ENCODE measurements at regions of chr5 and their contacts with region 1.

Region 1: DNA sequence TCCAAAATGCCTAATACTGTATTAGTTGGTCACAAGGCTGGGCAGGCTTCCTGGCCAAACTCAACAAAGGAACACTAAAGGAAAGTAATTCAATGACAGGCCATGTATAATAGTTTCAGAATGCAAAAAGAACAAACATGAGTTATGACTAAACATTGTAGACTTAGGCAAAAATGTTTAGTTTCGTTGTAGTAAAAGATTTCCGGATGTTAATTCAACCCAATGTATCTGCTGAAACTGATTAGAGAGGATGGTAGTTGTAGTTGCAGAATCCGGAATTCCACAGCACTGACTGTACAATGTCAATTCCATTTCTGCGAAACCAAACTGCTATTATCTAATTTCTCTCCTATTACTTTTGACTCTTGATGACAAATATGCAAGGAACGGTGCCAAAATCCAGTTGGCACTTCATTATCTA is 117.9 kb upstream of the FST start:
- DNase-seq: peak; percentile 45 to 95
- H3K4me3 ChIP-seq: no peak overlapping the region
- H3K27ac ChIP-seq: peak overlapping the region; percentile 97
- H3K4me1 ChIP-seq: peaks cover 38% of the 10 kb centered on the region
- H3K27me3 ChIP-seq: no peaks in the 10 kb centered on the region
- CTCF ChIP-seq: no peak

Region 2: GRCh38 chr5:52922386-52922785 is 440.1 kb before region 1 on chr5:
- CTCF ChIA-PET with region 1: no interaction called
- POLR2A ChIA-PET with region 1: no interaction called
- intact Hi-C with region 1: loop called (anchors 5 kb)
- DNase-seq: peak; percentile 83 to 98
- H3K4me3 ChIP-seq: no peak overlapping the region
- H3K27ac ChIP-seq: peak overlapping the region; percentile 78
- H3K4me1 ChIP-seq: peaks cover 20% of the 10 kb centered on the region
- H3K27me3 ChIP-seq: no peaks in the 10 kb centered on the region
- CTCF ChIP-seq: no peak

Region 3: GRCh38 chr5:53323943-53324642 is 38.4 kb before region 1 on chr5:
- CTCF ChIA-PET with region 1: no interaction called
- POLR2A ChIA-PET with region 1: no interaction called
- intact Hi-C with region 1: loop called (anchors 2 kb)
- DNase-seq: peak; percentile 51 to 88
- H3K4me3 ChIP-seq: no peak overlapping the region
- H3K27ac ChIP-seq: peak overlapping the region; percentile 45; the same call in 1 of the 2 replicates
- H3K4me1 ChIP-seq: peaks cover 16% of the 10 kb centered on the region
- H3K27me3 ChIP-seq: no peaks in the 10 kb centered on the region
- CTCF ChIP-seq: no peak

Region 4: GRCh38 chr5:53425598-53426511 is 63.3 kb after region 1 on chr5:
- CTCF ChIA-PET with region 1: no interaction called
- POLR2A ChIA-PET with region 1: no interaction called
- intact Hi-C with region 1: loop called (anchors 5 kb)
- DNase-seq: no peak
- H3K4me3 ChIP-seq: no peak overlapping the region
- H3K27ac ChIP-seq: no peak overlapping the region
- H3K4me1 ChIP-seq: 0 out of 2 replicates have a peak, but pooled peaks cover 6% of the 10 kb centered on the region
- H3K27me3 ChIP-seq: no peaks in the 10 kb centered on the region
- CTCF ChIP-seq: peak; percentile 45

Region 5: DNA sequence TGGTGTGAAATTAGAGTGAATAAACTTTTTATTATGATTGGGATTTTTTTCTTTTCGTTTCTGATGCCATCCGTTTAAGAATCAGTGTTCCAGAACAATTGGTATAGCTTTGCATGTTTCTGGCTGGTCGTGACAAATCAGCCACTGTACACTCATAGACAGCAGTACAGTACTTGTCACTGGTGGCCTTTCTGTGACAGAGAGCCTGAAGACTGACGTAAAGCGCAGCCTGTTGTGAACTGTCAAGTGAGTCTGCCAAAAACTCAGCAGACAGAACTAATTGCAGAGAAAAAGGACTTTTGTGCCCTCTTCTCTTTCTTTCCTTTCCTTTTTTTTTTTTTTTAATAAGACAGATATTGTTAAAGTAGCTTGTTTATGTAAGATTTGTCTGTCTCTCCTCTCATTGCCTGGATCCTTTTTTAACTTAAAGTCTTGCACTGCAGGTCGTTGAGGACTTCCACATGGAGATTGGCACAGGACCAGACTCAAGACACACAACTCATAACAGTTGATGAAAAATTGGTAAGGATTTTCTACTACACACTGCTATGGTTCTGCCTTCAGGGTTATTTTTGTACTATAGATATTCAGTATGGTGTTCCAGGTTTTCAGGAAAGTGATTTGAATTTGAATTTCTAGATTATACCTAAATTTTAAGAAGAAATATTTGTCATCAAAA is 240.6 kb after region 1 on chr5:
- CTCF ChIA-PET with region 1: no interaction called
- POLR2A ChIA-PET with region 1: no interaction called
- intact Hi-C with region 1: no loop called
- DNase-seq: no peak
- H3K4me3 ChIP-seq: no peak overlapping the region
- H3K27ac ChIP-seq: no peak overlapping the region
- H3K4me1 ChIP-seq: peaks cover 14% of the 10 kb centered on the region; the same call in 1 of the 2 replicates
- H3K27me3 ChIP-seq: no peaks in the 10 kb centered on the region
- CTCF ChIP-seq: no peak